Activated T-helper 1 cell treated with anti-CD3 and anti-CD28 coated beads, Interleukin-12 subunit alpha, Interleukin-12 subunit beta, Interleukin-2, Interleukin-4 antibody, amounts not matched to agents 30 ng/mL and 10 ng/mL and 1 ng/mL, durations not matched to agents 14 hours and 24 hours and 36 hours (primary cell): ENCODE measurements at regions of chr19 and their contacts with region 1.

Region 1: DNA sequence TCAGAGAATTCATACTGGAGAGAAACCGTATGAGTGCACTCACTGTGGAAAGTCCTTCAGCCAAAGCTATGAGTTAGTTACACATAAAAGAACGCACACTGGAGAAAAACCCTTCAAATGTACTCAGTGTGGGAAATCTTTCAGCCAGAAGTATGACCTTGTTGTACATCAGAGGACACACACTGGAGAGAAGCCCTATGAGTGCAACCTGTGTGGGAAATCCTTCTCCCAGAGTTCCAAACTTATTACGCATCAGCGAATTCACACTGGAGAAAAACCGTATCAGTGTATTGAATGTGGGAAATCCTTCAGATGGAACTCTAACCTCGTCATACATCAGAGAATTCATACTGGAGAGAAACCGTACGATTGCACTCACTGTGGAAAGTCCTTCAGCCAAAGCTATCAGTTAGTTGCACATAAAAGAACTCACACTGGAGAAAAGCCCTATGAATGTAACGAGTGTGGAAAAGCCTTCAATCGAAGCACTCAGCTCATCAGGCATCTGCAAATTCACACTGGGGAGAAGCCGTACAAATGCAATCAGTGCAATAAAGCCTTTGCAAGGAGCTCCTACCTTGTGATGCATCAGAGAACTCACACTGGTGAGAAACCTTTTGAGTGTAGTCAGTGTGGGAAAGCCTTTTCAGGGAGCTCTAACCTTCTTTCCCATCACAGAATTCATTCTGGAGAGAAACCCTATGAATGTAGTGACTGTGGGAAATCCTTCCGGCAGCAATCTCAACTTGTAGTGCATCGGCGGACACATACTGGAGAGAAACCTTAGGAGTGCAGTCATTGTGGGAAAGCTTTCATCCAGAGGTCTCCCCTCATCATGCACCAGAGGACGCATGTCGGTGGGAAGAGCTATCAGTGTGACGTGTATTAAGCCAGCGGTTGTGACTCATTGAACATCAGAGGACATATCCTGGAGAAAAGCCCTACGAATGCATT is 16.5 kb upstream of the ZNF8 start:
- DNase-seq: no peak
- H3K4me3 Mint-ChIP-seq: no peak overlapping the region
- H3K27ac Mint-ChIP-seq: no peak overlapping the region
- H3K4me1 Mint-ChIP-seq: no peaks in the 10 kb centered on the region
- H3K27me3 Mint-ChIP-seq: no peaks in the 10 kb centered on the region

Region 2: DNA sequence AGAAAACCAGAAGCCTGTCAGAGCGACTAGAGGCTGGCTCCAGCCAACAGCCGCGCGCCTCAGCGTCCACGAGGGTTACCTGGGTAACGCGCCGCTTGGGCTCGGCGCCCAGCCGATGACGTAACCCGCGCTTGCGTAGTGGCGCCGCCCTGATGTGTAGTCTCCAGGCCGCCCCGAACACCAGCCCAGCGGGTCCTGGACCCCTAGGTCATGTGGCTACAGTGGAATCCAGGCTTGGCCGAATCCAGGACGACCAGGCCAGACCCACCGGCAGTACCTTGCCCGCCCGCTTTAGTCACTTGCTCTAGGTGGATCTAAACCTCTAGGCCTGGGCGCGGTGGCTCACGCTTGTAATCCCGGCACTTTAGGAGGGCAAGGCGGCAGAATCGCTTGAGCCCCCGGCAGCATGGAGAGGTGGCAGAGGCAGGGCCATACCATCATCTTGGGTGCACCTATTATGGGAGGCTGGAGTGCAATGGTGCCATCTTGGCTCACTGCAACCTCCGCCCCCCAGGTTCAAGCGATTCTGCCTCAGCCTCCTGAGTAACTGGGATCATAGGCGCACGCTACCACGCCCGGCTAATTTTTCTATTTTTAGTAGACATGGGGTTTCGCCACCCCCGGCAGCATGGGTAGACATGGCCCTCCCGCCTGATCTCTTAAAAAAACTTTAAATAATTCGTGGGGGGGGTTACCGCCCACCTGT is 252.4 kb before region 1 on chr19:
- intact Hi-C with region 1: no loop called
- DNase-seq: peak; percentile 53
- H3K4me3 Mint-ChIP-seq: peak overlapping the region; percentile 81
- H3K27ac Mint-ChIP-seq: no peak overlapping the region
- H3K4me1 Mint-ChIP-seq: no peaks in the 10 kb centered on the region
- H3K27me3 Mint-ChIP-seq: no peaks in the 10 kb centered on the region

Region 3: DNA sequence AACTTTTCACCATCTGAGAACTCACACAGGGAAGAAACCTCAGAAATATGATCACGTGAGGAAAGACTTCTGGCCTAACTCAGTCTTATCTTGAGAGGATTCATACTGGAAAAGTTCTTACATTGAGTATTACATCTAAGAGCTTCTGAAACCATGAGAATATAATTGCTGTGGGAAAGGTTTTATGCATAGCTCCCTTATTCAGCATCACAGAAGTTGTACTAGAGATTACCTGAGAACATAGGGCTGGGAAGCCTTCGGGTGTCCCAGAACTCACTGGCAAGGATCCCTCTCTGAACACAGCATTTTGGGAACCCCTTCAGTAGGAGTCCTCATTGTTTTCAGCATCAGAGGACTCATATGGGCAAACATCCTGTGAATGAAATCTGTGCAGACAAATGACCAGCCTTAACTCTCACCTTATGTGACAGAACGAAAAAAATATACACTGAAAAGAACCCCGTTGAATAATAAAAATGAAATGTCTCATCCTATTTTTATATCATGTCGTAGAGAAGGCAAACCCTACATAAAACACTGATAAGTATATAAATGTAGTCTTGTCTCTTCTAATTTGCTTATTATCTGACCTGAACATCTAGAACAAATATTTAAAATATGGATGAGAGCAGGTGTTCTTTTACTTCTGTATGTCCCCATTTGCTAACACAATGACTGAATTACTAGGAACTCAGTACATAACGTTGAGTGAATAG is 65.2 kb before region 1 on chr19:
- intact Hi-C with region 1: loop called (anchors 2 kb)
- DNase-seq: no peak
- H3K4me3 Mint-ChIP-seq: no peak overlapping the region
- H3K27ac Mint-ChIP-seq: no peak overlapping the region
- H3K4me1 Mint-ChIP-seq: no peaks in the 10 kb centered on the region
- H3K27me3 Mint-ChIP-seq: no peaks in the 10 kb centered on the region

Region 4: GRCh38 chr19:58400916-58401839 is 138.9 kb after region 1 on chr19:
- intact Hi-C with region 1: no loop called
- DNase-seq: peak; percentile 99
- H3K4me3 Mint-ChIP-seq: peak overlapping the region; percentile 86
- H3K27ac Mint-ChIP-seq: peak overlapping the region; percentile 88
- H3K4me1 Mint-ChIP-seq: peaks cover 24% of the 10 kb centered on the region
- H3K27me3 Mint-ChIP-seq: peaks cover 5% of the 10 kb centered on the region